ENCODE measurements at regions of chr10 and their contacts with region 1.

Region 1: GRCh38 chr10:77603534-77603927 is 34.1 kb downstream of the KCNMA1 start:
- DNase-seq: peak in 1 of 2 experiments; percentile 30
- ATAC-seq: peak; percentile 8 to 44; a peak in 3 of 6 replicates
- H3K4me3 ChIP-seq: no peak overlapping the region
- H3K27ac ChIP-seq: peak overlapping the region; percentile 56 to 78; a peak in 5 of 6 replicates
- H3K4me1 ChIP-seq: peaks cover 47% of the 10 kb centered on the region
- CTCF ChIP-seq: no peak
- EP300 ChIP-seq: no peak
- POLR2A ChIP-seq: no peak
- RAD21 ChIP-seq: no peak

Region 2: DNA sequence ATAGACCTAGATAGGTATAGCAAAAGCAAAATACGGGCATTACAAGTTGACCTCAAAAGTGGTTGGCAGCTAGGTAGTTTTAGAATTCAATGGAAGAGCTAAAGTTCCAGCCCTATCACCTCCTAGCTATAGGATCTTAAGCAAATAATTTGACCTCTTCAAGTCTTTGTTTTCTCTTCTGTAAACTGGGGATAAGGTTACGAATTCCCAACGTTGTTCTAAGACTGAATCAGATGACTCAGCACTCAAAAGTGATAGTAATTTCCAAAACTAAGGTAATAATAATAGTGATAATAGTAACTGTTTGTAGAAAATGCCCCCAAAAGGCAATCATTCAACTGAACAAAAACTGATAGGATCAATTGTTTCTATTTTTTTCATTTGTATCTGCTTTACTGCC is 411.1 kb before region 1 on chr10:
- CTCF ChIA-PET with region 1: no interaction called
- POLR2A ChIA-PET with region 1: no interaction called
- DNase-seq: no peak
- ATAC-seq: no peak
- H3K4me3 ChIP-seq: no peak overlapping the region
- H3K27ac ChIP-seq: peak overlapping the region in 1 of 2 experiments; percentile 63; a peak in 1 of 6 replicates
- H3K4me1 ChIP-seq: peaks cover 20% of the 10 kb centered on the region
- CTCF ChIP-seq: no peak
- EP300 ChIP-seq: no peak
- POLR2A ChIP-seq: no peak
- RAD21 ChIP-seq: no peak

Region 3: GRCh38 chr10:77613476-77614130 is 10.1 kb after region 1 on chr10:
- CTCF ChIA-PET with region 1: interaction called, 11 read pairs
- POLR2A ChIA-PET with region 1: no interaction called
- DNase-seq: no peak
- ATAC-seq: no peak
- H3K4me3 ChIP-seq: no peak overlapping the region
- H3K27ac ChIP-seq: no peak overlapping the region; a peak in 1 of 6 replicates
- H3K4me1 ChIP-seq: no peaks in the 10 kb centered on the region
- CTCF ChIP-seq: no peak
- EP300 ChIP-seq: no peak
- POLR2A ChIP-seq: no peak
- RAD21 ChIP-seq: no peak

Measured in A549 (cell line).